H1 (cell line): ENCODE measurements at regions of chr7 and their contacts with region 1.

Region 1: DNA sequence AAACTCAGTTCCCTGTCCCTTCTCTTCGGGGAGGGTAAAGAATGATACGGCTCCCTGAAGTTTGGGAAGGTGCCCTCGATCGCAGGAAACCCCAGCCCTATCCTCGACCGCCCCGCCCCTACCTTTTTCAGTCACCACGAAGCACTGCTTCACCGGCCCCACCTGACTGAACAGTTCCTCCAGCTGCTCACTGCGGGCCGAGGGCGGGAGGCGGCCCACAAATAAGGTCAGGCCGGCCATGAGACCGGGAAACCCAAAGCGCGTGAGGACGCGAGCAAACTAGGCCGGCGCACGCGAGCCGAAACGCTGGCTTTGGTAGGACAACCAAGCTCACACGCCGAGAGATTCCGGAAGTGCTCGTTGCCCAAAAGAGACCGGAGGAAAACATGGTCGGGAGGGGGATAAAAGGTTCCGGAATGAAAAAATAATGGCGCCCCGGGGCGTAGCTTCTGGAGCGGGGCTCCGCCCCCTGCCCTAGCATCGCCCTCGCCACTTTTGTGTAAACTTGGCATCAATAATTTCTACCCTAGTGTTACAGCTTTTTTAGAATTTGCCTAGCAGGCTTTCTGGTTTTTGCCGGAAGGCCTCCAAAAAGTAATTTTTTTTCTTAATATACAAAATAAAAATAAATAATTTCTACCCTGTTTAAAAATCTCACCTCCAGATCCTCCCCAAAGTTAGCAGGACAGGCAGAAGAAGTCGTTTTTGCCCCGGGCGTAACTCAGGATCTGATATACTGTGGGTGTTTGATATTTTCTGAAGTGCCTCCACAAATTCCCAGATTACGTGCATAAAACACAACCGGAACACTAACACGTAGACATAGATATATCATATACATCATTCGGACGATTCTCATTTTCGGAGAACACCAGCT is at the start of gene RBM28:
- DNase-seq: peak; percentile 65 to 95
- H3K4me3 ChIP-seq: peak within 1 kb of the TSS; percentile 67 to 90 (median 88)
- H3K27ac ChIP-seq: peak within 1 kb of the TSS; percentile 90
- H3K4me1 ChIP-seq: peaks cover 0 to 5% (median 4%) of the 10 kb centered on the region in 4 experiments; a peak in 3 of 7 replicates
- H3K27me3 ChIP-seq: peaks cover under 1 to 7% (median 2%) of the 10 kb centered on the region in 4 experiments; a peak in 6 of 7 replicates
- CTCF ChIP-seq: no peak
- EP300 ChIP-seq: no peak
- POLR2A ChIP-seq: peak; percentile 85 to 91
- RAD21 ChIP-seq: 0 out of 4 replicates have a peak, but pooled peaks of 1 of the 2 experiments have one; percentile 9
- total RNA-seq, gene RBM28: 65.3 and 68.0 TPM in 2 replicates

Region 2: DNA sequence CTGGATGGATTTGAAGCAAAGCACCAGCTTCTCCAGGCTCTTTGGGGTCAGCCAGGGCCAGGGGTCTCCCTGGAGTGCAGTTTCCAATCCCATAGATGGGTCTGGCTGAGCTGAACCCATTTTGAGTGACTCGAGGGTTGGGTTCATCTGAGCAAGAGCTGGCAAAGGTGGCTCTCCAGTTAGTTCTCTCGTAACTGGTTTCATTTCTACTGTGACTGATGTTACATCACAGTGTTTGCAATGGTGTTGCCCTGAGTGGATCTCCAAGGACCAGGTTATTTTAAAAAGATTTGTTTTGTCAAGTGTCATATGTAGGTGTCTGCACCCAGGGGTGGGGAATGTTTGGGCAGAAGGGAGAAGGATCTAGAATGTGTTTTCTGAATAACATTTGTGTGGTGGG is 88.5 kb before region 1 on chr7:
- CTCF ChIA-PET with region 1: no interaction called
- POLR2A ChIA-PET with region 1: no interaction called
- DNase-seq: no peak
- H3K4me3 ChIP-seq: no peak overlapping the region
- H3K27ac ChIP-seq: no peak overlapping the region
- H3K4me1 ChIP-seq: peaks cover 3 to 11% (median 8%) of the 10 kb centered on the region in 4 experiments
- H3K27me3 ChIP-seq: no peaks in the 10 kb centered on the region
- CTCF ChIP-seq: no peak
- EP300 ChIP-seq: no peak
- POLR2A ChIP-seq: no peak
- RAD21 ChIP-seq: no peak

Region 3: GRCh38 chr7:128311013-128311412 is 32.8 kb before region 1 on chr7:
- CTCF ChIA-PET with region 1: no interaction called
- POLR2A ChIA-PET with region 1: no interaction called
- DNase-seq: no peak
- H3K4me3 ChIP-seq: no peak overlapping the region
- H3K27ac ChIP-seq: no peak overlapping the region
- H3K4me1 ChIP-seq: no peaks in the 10 kb centered on the region
- H3K27me3 ChIP-seq: no peaks in the 10 kb centered on the region
- CTCF ChIP-seq: no peak
- EP300 ChIP-seq: no peak
- POLR2A ChIP-seq: no peak
- RAD21 ChIP-seq: no peak

Region 4: DNA sequence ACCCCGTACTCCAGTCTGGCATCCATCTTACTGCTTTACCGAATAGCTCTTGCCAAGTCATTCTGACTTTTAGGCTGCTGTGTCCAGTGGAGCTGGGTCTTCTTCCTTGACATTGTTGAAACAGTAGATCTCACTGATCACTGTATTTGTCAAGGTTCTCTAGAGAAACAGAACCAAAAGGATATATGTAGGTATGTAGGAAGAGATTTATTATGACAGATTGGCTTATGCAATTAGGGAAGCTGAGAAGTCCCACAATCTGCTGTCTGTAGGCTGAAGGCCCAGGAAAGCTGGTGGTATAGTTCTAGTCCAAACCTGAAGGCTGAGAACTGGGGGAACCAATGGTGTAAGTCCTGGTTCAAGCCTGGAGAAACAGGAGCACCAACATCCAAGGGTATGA is 29.8 kb after region 1 on chr7:
- CTCF ChIA-PET with region 1: interaction called, 345 read pairs
- POLR2A ChIA-PET with region 1: interaction called, 4 read pairs
- DNase-seq: no peak
- H3K4me3 ChIP-seq: no peak overlapping the region
- H3K27ac ChIP-seq: no peak overlapping the region
- H3K4me1 ChIP-seq: no peaks in the 10 kb centered on the region
- H3K27me3 ChIP-seq: 0 out of 7 replicates have a peak, but pooled peaks cover 0 to under 1% (median 0%) of the 10 kb centered on the region in 4 experiments
- CTCF ChIP-seq: no peak
- EP300 ChIP-seq: no peak
- POLR2A ChIP-seq: no peak
- RAD21 ChIP-seq: no peak